AG04449 (cell line): ENCODE measurements at regions of chr7 and their contacts with region 1.

Region 1: GRCh38 chr7:12490117-12490688 is 80.3 kb upstream of the SCIN start:
- DNase-seq: no peak
- H3K4me3 ChIP-seq: no peak overlapping the region
- CTCF ChIP-seq: peak; percentile 22

Region 2: DNA sequence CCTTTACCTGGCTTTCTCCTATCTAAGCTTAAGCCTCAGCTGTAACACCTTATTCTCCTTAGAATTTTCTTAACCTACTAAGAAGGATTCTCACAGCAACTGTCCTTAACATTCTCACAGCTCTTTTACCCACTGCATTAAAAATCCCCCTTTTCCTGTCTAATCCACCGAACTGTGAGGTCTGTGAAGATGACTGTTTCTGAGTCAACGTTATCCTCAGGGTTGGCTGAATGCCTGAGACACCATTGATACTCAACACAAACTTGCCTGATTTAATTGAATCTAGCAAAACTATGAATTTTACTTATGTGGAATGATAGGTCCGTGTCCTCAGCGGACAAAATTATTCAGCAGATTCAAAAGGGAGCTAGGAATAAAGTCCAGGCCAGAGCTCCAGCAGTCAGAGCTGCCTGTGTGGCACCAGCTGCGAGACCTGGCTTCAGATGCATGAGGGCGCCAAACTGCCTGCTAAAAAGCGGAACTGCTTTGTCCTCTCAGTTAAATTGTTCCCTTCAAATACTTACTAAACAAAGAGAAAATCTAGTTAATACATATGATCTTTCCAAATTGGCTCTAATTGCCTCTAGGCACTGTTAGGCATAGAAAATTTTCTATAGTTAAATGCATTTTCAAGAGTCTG is 53.2 kb before region 1 on chr7:
- CTCF ChIA-PET with region 1: interaction called, 13 read pairs
- POLR2A ChIA-PET with region 1: no interaction called
- DNase-seq: no peak
- H3K4me3 ChIP-seq: no peak overlapping the region
- CTCF ChIP-seq: no peak

Region 3: GRCh38 chr7:12475362-12476063 is 14.7 kb before region 1 on chr7:
- CTCF ChIA-PET with region 1: interaction called, 10 read pairs
- POLR2A ChIA-PET with region 1: no interaction called
- DNase-seq: no peak
- H3K4me3 ChIP-seq: no peak overlapping the region
- CTCF ChIP-seq: no peak